CD4-positive, alpha-beta T cell (primary cell): ENCODE measurements at regions of chr13 and their contacts with region 1.

Region 1: GRCh38 chr13:40982772-40983171 is 36.3 kb downstream of the ELF1 start:
- DNase-seq: peak in 9 of 14 experiments; percentile 24 to 94 (median 52)
- ATAC-seq: peak; percentile 65
- H3K4me3 ChIP-seq: peak overlapping the region; percentile 71
- H3K4me3 Mint-ChIP-seq: peak overlapping the region; percentile 96
- H3K27ac ChIP-seq: peak overlapping the region; percentile 87 to 91
- H3K27ac Mint-ChIP-seq: peak overlapping the region; percentile 92
- H3K4me1 ChIP-seq: peaks cover 26% of the 10 kb centered on the region
- H3K4me1 Mint-ChIP-seq: peaks cover 59% of the 10 kb centered on the region
- H3K27me3 ChIP-seq: no peaks in the 10 kb centered on the region
- H3K27me3 Mint-ChIP-seq: no peaks in the 10 kb centered on the region
- CTCF ChIP-seq: no peak

Region 2: DNA sequence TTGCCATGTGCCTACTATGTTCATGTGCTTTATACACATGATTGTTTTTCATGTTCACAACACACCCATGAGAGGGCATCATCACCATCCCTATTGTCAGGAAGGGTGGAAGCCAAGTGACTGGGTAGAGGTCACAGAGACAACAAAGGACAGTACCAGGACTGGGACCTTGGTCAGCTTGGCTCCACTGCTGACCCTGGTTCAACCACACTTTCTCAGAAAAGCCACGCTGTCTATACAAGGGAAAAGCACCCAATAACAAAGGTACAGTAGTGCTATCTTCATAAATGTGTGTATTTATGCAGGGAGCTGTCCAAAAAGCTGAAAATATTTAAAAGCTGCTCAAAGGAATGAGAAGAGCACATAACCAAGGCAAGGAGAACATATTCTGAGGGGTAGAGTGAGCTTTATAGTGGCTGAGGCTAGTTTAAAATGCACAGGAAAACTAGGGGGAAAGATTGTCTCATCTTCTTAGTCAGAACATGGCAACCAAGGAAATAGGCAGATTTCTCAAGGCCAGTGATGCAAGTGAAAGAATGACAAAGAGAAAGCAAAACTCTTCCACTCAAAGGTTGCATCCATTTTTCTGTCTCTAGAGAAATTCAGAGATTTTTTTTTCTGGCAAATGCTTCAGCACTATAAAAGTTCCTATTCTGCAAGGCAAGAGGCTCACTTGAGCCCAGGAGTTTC is 731.3 kb before region 1 on chr13:
- CTCF ChIA-PET with region 1: no interaction called
- POLR2A ChIA-PET with region 1: no interaction called
- intact Hi-C with region 1: loop called in 1 of 2 experiments (anchors 5 kb)
- DNase-seq: peak in 2 of 14 experiments; percentile 9 to 15
- ATAC-seq: peak; percentile 24
- H3K4me3 ChIP-seq: no peak overlapping the region
- H3K4me3 Mint-ChIP-seq: no peak overlapping the region
- H3K27ac ChIP-seq: no peak overlapping the region
- H3K27ac Mint-ChIP-seq: no peak overlapping the region
- H3K4me1 ChIP-seq: peaks cover 4% of the 10 kb centered on the region
- H3K4me1 Mint-ChIP-seq: peaks cover 37% of the 10 kb centered on the region
- H3K27me3 ChIP-seq: no peaks in the 10 kb centered on the region
- H3K27me3 Mint-ChIP-seq: no peaks in the 10 kb centered on the region
- CTCF ChIP-seq: no peak

Region 3: DNA sequence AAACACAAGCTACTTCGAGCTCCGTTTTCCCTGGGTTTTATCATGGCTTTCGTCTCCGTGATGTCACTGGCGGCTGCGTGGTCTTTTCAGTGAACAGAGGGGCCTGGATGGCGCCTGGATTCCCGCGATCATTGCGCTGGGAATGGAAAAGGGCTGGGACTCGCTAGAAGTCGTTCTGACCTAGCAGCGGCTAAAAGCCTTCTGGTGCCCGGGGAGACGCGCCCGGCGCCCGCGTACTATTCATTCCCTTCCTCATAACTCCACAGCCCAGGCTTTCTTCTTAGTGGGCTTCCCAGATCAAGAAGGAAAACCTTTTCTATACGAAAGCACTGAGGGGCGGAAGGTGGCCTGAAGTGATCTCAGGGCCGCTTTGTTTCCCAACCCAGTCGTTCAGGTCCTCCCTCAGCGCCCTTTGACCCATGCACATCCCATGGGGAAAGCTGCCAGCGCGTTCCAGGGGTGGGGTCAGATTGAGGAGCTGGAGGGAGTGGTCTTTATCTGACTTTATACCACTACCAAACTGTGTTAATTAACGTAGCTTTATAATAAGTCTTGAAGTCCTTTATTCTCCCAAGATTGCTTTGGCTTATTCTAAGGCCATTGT is 60.2 kb before region 1 on chr13:
- CTCF ChIA-PET with region 1: no interaction called
- POLR2A ChIA-PET with region 1: interaction called, 11 read pairs
- intact Hi-C with region 1: no loop called
- DNase-seq: peak in 2 of 14 experiments; percentile 9 to 37
- ATAC-seq: no peak
- H3K4me3 ChIP-seq: no peak overlapping the region
- H3K4me3 Mint-ChIP-seq: peak overlapping the region; percentile 80
- H3K27ac ChIP-seq: no peak overlapping the region
- H3K27ac Mint-ChIP-seq: peak overlapping the region; percentile 42
- H3K4me1 ChIP-seq: peaks cover 15% of the 10 kb centered on the region
- H3K4me1 Mint-ChIP-seq: peaks cover 25% of the 10 kb centered on the region
- H3K27me3 ChIP-seq: no peaks in the 10 kb centered on the region
- H3K27me3 Mint-ChIP-seq: no peaks in the 10 kb centered on the region
- CTCF ChIP-seq: no peak

Region 4: GRCh38 chr13:40992678-40993518 is 10.1 kb after region 1 on chr13:
- CTCF ChIA-PET with region 1: interaction called, 5 read pairs
- POLR2A ChIA-PET with region 1: interaction called, 17 read pairs
- intact Hi-C with region 1: loop called in 1 of 2 experiments (anchors 1 kb)
- DNase-seq: peak in 3 of 14 experiments; percentile 40 to 63 (median 62)
- ATAC-seq: peak; percentile 52
- H3K4me3 ChIP-seq: no peak overlapping the region
- H3K4me3 Mint-ChIP-seq: peak overlapping the region; percentile 16
- H3K27ac ChIP-seq: peak overlapping the region; percentile 49 to 55
- H3K27ac Mint-ChIP-seq: peak overlapping the region; percentile 84
- H3K4me1 ChIP-seq: peaks cover 50% of the 10 kb centered on the region
- H3K4me1 Mint-ChIP-seq: peaks cover 92% of the 10 kb centered on the region
- H3K27me3 ChIP-seq: no peaks in the 10 kb centered on the region
- H3K27me3 Mint-ChIP-seq: no peaks in the 10 kb centered on the region
- CTCF ChIP-seq: peak; percentile 40

Region 5: GRCh38 chr13:41019011-41019487 is 36.3 kb after region 1 on chr13 and contains the start of gene ELF1:
- CTCF ChIA-PET with region 1: interaction called, 7 read pairs
- POLR2A ChIA-PET with region 1: interaction called, 152 read pairs
- intact Hi-C with region 1: loop called (anchors 1 to 5 kb)
- DNase-seq: peak in 13 of 14 experiments; percentile 39 to 89 (median 53)
- ATAC-seq: peak; percentile 89
- H3K4me3 ChIP-seq: peak within 1 kb of the TSS; percentile 68
- H3K4me3 Mint-ChIP-seq: peak within 1 kb of the TSS; percentile 94
- H3K27ac ChIP-seq: peak within 1 kb of the TSS; percentile 77 to 85
- H3K27ac Mint-ChIP-seq: peak within 1 kb of the TSS; percentile 94
- H3K4me1 ChIP-seq: no peaks in the 10 kb centered on the region
- H3K4me1 Mint-ChIP-seq: peaks cover 49% of the 10 kb centered on the region
- H3K27me3 ChIP-seq: no peaks in the 10 kb centered on the region
- H3K27me3 Mint-ChIP-seq: no peaks in the 10 kb centered on the region
- CTCF ChIP-seq: no peak
- total RNA-seq, gene ELF1: 354 to 358 TPM